A673 (cell line): ENCODE measurements at regions of chr10 and their contacts with region 1.

Region 1: GRCh38 chr10:17430647-17431355 is 23.6 kb downstream of the ST8SIA6 start:
- DNase-seq: peak; percentile 78
- H3K4me3 ChIP-seq: no peak overlapping the region
- H3K27ac ChIP-seq: no peak overlapping the region
- H3K4me1 ChIP-seq: no peaks in the 10 kb centered on the region
- H3K27me3 ChIP-seq: peaks cover 26% of the 10 kb centered on the region
- CTCF ChIP-seq: peak; percentile 91

Region 2: GRCh38 chr10:17286562-17287550 is 143.9 kb before region 1 on chr10:
- CTCF ChIA-PET with region 1: no interaction called
- POLR2A ChIA-PET with region 1: interaction called, 3 read pairs
- intact Hi-C with region 1: loop called (anchors 5 kb)
- DNase-seq: no peak
- H3K4me3 ChIP-seq: no peak overlapping the region
- H3K27ac ChIP-seq: no peak overlapping the region
- H3K4me1 ChIP-seq: no peaks in the 10 kb centered on the region
- H3K27me3 ChIP-seq: peaks cover 55% of the 10 kb centered on the region
- CTCF ChIP-seq: no peak

Region 3: GRCh38 chr10:17643755-17644484 is 213.1 kb after region 1 on chr10 and contains the start of gene STAM:
- CTCF ChIA-PET with region 1: no interaction called
- POLR2A ChIA-PET with region 1: no interaction called
- intact Hi-C with region 1: no loop called
- DNase-seq: peak; percentile 96
- H3K4me3 ChIP-seq: peak within 1 kb of the TSS; percentile 79
- H3K27ac ChIP-seq: peak within 1 kb of the TSS; percentile 98
- H3K4me1 ChIP-seq: peaks cover 16% of the 10 kb centered on the region
- H3K27me3 ChIP-seq: no peaks in the 10 kb centered on the region
- CTCF ChIP-seq: no peak
- total RNA-seq, gene STAM: 34.9 and 37.4 TPM in 2 replicates